ENCODE measurements at regions of chr2 and their contacts with region 1.

Region 1: DNA sequence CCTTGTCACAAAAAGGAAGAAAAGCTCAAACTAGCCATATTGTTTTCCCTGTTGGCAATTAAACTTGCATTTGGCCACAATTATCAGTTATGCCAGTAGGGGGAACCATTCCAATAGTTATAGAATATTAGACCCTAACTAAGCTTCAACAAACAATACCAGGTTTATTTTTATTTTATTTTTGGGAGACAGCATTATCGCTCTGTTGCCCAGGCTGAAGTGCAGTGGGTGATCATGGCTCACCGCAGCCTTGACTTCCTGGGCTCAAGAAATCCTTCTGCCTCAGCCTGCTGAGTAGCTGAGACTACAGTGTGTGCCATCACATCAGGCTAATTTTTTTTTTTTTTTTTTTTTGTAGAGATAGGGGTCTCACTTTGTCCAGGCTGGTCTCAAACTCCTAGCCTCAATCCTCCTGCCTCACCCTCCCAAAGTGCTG is 102.1 kb downstream of the ATAD2B start:
- DNase-seq: peak; percentile 48
- ATAC-seq: peak; percentile 70
- H3K4me3 ChIP-seq: no peak overlapping the region
- H3K27ac ChIP-seq: no peak overlapping the region
- H3K4me1 ChIP-seq: no peaks in the 10 kb centered on the region
- H3K27me3 ChIP-seq: no peaks in the 10 kb centered on the region
- CTCF ChIP-seq: peak; percentile 80

Region 2: DNA sequence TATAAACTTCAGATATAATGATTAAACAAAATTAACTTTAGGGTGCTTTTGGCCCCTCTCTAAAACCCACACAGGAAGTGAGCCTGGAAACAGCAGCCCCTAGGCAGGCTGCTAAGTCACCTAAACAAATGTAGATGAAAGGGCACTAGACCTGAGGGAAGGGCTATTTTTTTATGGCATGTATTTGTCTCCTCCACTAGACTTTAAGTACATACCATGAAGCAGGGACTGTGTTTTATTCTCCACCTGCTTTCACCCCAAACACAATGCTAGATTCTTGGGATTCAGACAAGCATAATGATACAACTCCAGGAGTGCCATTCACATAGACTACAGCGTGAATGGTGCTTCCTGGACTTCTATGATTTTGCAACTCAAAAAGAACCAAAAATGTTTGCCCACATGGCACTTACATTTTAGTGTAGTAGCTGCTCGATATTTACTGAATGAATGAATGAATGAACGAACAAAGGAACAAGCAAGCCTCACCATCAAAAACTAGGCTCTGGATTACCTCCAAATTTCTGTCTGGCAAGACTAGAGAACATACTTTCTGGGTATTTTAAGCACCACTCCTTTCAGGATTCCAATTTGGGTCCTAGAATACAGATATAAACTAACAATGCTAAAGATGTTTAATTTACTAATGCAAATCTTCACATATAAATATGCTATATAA is 92.1 kb after region 1 on chr2:
- CTCF ChIA-PET with region 1: interaction called, 3 read pairs
- POLR2A ChIA-PET with region 1: interaction called, 11 read pairs
- in situ Hi-C with region 1: no loop called
- intact Hi-C with region 1: no loop called
- DNase-seq: no peak
- ATAC-seq: peak; percentile 66; the same call in 1 of the 2 replicates
- H3K4me3 ChIP-seq: no peak overlapping the region
- H3K27ac ChIP-seq: peak overlapping the region; percentile 20; the same call in 1 of the 2 replicates
- H3K4me1 ChIP-seq: peaks cover 20% of the 10 kb centered on the region
- H3K27me3 ChIP-seq: no peaks in the 10 kb centered on the region
- CTCF ChIP-seq: no peak

Region 3: GRCh38 chr2:23926750-23927571 is 102.2 kb after region 1 on chr2 and contains the start of gene ATAD2B:
- CTCF ChIA-PET with region 1: interaction called, 16 read pairs
- POLR2A ChIA-PET with region 1: no interaction called
- in situ Hi-C with region 1: no loop called
- intact Hi-C with region 1: no loop called
- DNase-seq: peak; percentile 84
- ATAC-seq: peak; percentile 93
- H3K4me3 ChIP-seq: peak within 1 kb of the TSS; percentile 92 to 93
- H3K27ac ChIP-seq: peak within 1 kb of the TSS; percentile 93
- H3K4me1 ChIP-seq: peaks cover 8% of the 10 kb centered on the region
- H3K27me3 ChIP-seq: no peaks in the 10 kb centered on the region
- CTCF ChIP-seq: peak; percentile 98
- total RNA-seq, gene ATAD2B: 17.9 TPM

Region 4: GRCh38 chr2:24065341-24065740 is 240.5 kb after region 1 on chr2:
- CTCF ChIA-PET with region 1: no interaction called
- POLR2A ChIA-PET with region 1: no interaction called
- in situ Hi-C with region 1: no loop called
- intact Hi-C with region 1: loop called (anchors 10 kb)
- DNase-seq: no peak
- ATAC-seq: no peak
- H3K4me3 ChIP-seq: no peak overlapping the region
- H3K27ac ChIP-seq: no peak overlapping the region
- H3K4me1 ChIP-seq: no peaks in the 10 kb centered on the region
- H3K27me3 ChIP-seq: no peaks in the 10 kb centered on the region
- CTCF ChIP-seq: no peak